ENCODE measurements at regions of chr2 and their contacts with region 1.

Region 1: GRCh38 chr2:70919672-70920366 is 15.9 kb upstream of the ATP6V1B1 start:
- DNase-seq: peak; percentile 79 to 99
- H3K4me3 ChIP-seq: no peak overlapping the region
- H3K27ac ChIP-seq: no peak overlapping the region
- H3K4me1 ChIP-seq: peaks cover 0 to 8% (median 3%) of the 10 kb centered on the region in 4 experiments; a peak in 4 of 7 replicates
- H3K27me3 ChIP-seq: peaks cover 0 to 4% (median 0%) of the 10 kb centered on the region in 4 experiments; a peak in 1 of 7 replicates
- CTCF ChIP-seq: peak; percentile 91 to 98 (median 96)
- EP300 ChIP-seq: no peak
- POLR2A ChIP-seq: no peak
- RAD21 ChIP-seq: peak; percentile 77 to 82

Region 2: DNA sequence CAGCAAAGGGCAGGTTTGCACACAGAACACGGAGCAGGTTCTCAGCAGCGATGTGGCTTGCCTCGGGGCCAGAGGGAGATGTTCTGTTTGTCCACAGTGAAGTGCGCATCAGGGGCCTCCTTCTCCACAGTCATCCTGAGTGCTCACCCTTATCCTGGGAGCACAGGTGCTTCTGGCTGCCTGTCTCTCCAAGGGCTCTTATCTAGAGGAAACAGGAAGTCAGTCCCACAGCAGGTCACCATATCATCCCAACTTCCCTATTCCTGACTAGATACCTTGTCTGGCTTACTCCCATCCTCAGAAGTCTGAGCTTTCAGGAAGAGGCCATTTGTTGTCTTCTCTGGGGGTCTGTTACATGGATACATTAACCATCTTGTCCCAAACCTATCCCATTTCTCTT is 84.2 kb before region 1 on chr2 and contains the start of gene CD207:
- CTCF ChIA-PET with region 1: no interaction called
- POLR2A ChIA-PET with region 1: no interaction called
- DNase-seq: no peak
- H3K4me3 ChIP-seq: no peak within 1 kb of the TSS
- H3K27ac ChIP-seq: no peak within 1 kb of the TSS
- H3K4me1 ChIP-seq: no peaks in the 10 kb centered on the region
- H3K27me3 ChIP-seq: peaks cover 0 to 2% (median under 1%) of the 10 kb centered on the region in 4 experiments; a peak in 2 of 7 replicates
- CTCF ChIP-seq: no peak
- EP300 ChIP-seq: no peak
- POLR2A ChIP-seq: no peak
- RAD21 ChIP-seq: no peak
- total RNA-seq, gene CD207: not detected in 2 replicates

Region 3: GRCh38 chr2:70887550-70888246 is 32.1 kb before region 1 on chr2:
- CTCF ChIA-PET with region 1: interaction called, 79 read pairs
- POLR2A ChIA-PET with region 1: no interaction called
- DNase-seq: peak in 1 of 2 experiments; percentile 90
- H3K4me3 ChIP-seq: peak overlapping the region; percentile 22 to 62 (median 40); a peak in 7 of 8 replicates
- H3K27ac ChIP-seq: no peak overlapping the region
- H3K4me1 ChIP-seq: peaks cover 0 to 20% (median 6%) of the 10 kb centered on the region in 4 experiments; a peak in 5 of 7 replicates
- H3K27me3 ChIP-seq: peaks cover 77 to 100% (median 93%) of the 10 kb centered on the region in 4 experiments
- CTCF ChIP-seq: no peak
- EP300 ChIP-seq: no peak
- POLR2A ChIP-seq: no peak
- RAD21 ChIP-seq: no peak

Region 4: GRCh38 chr2:70907130-70908057 is 12.4 kb before region 1 on chr2:
- CTCF ChIA-PET with region 1: interaction called, 57 read pairs
- POLR2A ChIA-PET with region 1: no interaction called
- DNase-seq: peak in 1 of 2 experiments; percentile 59
- H3K4me3 ChIP-seq: peak overlapping the region in 1 of 4 experiments; percentile 40; a peak in 2 of 8 replicates
- H3K27ac ChIP-seq: no peak overlapping the region
- H3K4me1 ChIP-seq: peaks cover 0 to 12% (median 7%) of the 10 kb centered on the region in 4 experiments; a peak in 4 of 7 replicates
- H3K27me3 ChIP-seq: peaks cover 64 to 84% (median 69%) of the 10 kb centered on the region in 4 experiments
- CTCF ChIP-seq: no peak
- EP300 ChIP-seq: no peak
- POLR2A ChIP-seq: no peak
- RAD21 ChIP-seq: no peak

Region 5: DNA sequence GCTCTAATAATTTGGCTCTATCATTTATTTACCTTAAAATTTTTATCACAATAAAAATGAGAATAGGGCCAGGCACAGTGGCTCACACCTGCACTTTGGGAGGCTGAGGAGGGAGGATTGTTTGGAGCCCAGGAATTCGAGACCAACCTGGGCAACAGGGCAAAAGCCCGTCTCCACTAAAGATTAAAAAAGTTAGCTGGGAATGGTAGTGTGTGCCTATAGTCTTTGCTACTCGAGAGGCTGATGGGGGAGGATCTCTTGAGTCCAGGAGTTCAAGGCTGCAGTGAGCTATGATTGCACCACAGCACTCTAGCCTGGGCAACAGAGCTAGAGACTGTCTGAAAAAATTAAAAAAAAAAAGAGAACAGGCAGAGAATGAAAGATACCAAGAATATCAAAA is 216.4 kb after region 1 on chr2:
- CTCF ChIA-PET with region 1: no interaction called
- POLR2A ChIA-PET with region 1: no interaction called
- DNase-seq: no peak
- H3K4me3 ChIP-seq: no peak overlapping the region
- H3K27ac ChIP-seq: no peak overlapping the region
- H3K4me1 ChIP-seq: no peaks in the 10 kb centered on the region
- H3K27me3 ChIP-seq: no peaks in the 10 kb centered on the region
- CTCF ChIP-seq: no peak
- EP300 ChIP-seq: no peak
- POLR2A ChIP-seq: no peak
- RAD21 ChIP-seq: no peak

Region 6: GRCh38 chr2:71243634-71244304 is 323.9 kb after region 1 on chr2:
- CTCF ChIA-PET with region 1: no interaction called
- POLR2A ChIA-PET with region 1: no interaction called
- DNase-seq: no peak
- H3K4me3 ChIP-seq: no peak overlapping the region
- H3K27ac ChIP-seq: no peak overlapping the region
- H3K4me1 ChIP-seq: no peaks in the 10 kb centered on the region
- H3K27me3 ChIP-seq: no peaks in the 10 kb centered on the region; a peak in 1 of 7 replicates
- CTCF ChIP-seq: no peak
- EP300 ChIP-seq: no peak
- POLR2A ChIP-seq: no peak
- RAD21 ChIP-seq: no peak

Measured in H1 (cell line).